Mammary epithelial cell (primary cell): ENCODE measurements at regions of chr1 and their contacts with region 1.

Region 1: GRCh38 chr1:4801192-4801924 is 146.9 kb downstream of the AJAP1 start:
- DNase-seq: no peak
- H3K4me3 ChIP-seq: no peak overlapping the region
- H3K27ac ChIP-seq: no peak overlapping the region
- H3K4me1 ChIP-seq: no peaks in the 10 kb centered on the region
- H3K27me3 ChIP-seq: no peaks in the 10 kb centered on the region
- CTCF ChIP-seq: no peak

Region 2: GRCh38 chr1:4718071-4718470 is 83.3 kb before region 1 on chr1:
- CTCF ChIA-PET with region 1: no interaction called
- dilution Hi-C with region 1: no loop called
- in situ Hi-C with region 1: no loop called
- intact Hi-C with region 1: no loop called
- DNase-seq: no peak
- H3K4me3 ChIP-seq: no peak overlapping the region
- H3K27ac ChIP-seq: no peak overlapping the region
- H3K4me1 ChIP-seq: no peaks in the 10 kb centered on the region
- H3K27me3 ChIP-seq: no peaks in the 10 kb centered on the region
- CTCF ChIP-seq: no peak

Region 3: GRCh38 chr1:4768553-4768952 is 32.8 kb before region 1 on chr1:
- CTCF ChIA-PET with region 1: no interaction called
- dilution Hi-C with region 1: loop called (anchors 5 kb)
- in situ Hi-C with region 1: no loop called
- intact Hi-C with region 1: no loop called
- DNase-seq: no peak
- H3K4me3 ChIP-seq: no peak overlapping the region
- H3K27ac ChIP-seq: no peak overlapping the region
- H3K4me1 ChIP-seq: no peaks in the 10 kb centered on the region
- H3K27me3 ChIP-seq: no peaks in the 10 kb centered on the region
- CTCF ChIP-seq: no peak

Region 4: GRCh38 chr1:4894566-4894965 is 93.2 kb after region 1 on chr1:
- CTCF ChIA-PET with region 1: no interaction called
- dilution Hi-C with region 1: no loop called
- in situ Hi-C with region 1: no loop called
- intact Hi-C with region 1: no loop called
- DNase-seq: no peak
- H3K4me3 ChIP-seq: no peak overlapping the region
- H3K27ac ChIP-seq: no peak overlapping the region
- H3K4me1 ChIP-seq: no peaks in the 10 kb centered on the region
- H3K27me3 ChIP-seq: no peaks in the 10 kb centered on the region
- CTCF ChIP-seq: no peak